ENCODE measurements at regions of chr14 and their contacts with region 1.

Region 1: DNA sequence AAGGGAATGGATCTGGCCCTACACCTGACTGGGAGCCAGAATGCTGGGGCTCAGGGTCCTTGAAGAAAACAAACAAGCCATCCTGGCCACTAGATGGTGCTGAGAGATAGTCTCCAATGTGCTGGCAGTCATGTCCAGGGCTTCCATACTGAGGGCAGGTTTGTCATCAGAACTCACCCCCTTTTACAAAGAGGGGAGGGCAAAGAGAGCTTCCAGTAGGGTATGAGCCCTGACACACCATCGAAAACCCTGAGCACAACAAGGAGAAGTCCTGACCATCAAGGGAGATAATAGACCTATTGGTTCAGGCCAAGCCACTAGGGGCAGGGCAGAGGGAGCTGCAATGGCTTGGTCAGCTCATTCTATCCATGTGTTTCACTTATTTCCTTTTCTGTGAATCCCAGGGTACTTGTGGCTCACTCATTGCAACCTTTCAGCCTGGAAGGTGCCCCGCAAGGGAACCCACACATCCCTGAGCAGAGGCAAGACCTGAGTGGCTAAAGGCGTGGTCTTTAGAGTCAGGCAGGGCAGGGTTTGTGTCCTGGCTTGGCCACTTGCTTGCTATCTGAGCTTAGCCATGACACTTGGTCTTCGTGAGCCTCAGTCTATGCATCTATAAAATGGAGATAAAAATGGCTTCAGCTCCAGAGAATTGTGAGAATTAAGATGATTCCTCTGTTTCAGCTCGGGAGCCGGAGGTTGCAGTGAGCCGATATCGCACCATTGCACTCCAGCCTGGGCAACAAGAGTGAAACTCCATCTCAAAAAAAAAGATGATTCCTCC is 6.2 kb upstream of the PLEKHH1 start:
- DNase-seq: peak; percentile 24
- H3K4me3 Mint-ChIP-seq: no peak overlapping the region
- H3K27ac Mint-ChIP-seq: no peak overlapping the region
- H3K4me1 Mint-ChIP-seq: no peaks in the 10 kb centered on the region
- H3K27me3 Mint-ChIP-seq: peaks cover 81% of the 10 kb centered on the region

Region 2: DNA sequence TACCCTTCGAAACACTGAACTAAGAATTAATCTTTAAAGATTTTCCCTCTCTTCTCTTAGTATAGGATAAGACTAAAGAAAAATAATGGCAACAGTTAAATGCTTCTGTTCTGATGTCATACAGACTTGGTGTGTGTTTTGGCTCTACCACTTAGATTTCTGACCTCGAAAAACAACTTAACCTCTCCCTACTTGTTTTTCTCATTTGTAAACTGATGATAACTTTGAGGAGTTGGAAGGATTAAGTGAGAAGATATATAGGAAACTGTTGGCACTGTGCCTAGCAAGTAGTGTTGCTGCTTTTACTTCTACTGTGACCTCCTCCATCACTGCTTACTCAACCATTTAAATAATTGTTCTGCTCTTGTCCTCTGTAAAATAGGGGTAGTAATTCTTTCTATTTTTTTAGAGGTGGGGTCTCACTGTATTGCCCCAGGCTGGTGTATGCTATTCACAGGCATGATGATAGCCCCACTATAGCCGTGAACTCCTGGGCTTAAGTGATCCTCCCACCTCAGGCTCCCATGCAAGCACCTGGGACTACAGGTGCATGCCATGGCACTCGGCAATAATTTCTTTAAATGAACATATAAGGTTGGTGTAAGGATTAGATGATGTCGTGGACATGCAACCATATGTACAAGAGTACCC is 263.2 kb before region 1 on chr14:
- intact Hi-C with region 1: no loop called
- DNase-seq: no peak
- H3K4me3 Mint-ChIP-seq: no peak overlapping the region
- H3K27ac Mint-ChIP-seq: no peak overlapping the region
- H3K4me1 Mint-ChIP-seq: peaks cover 9% of the 10 kb centered on the region
- H3K27me3 Mint-ChIP-seq: no peaks in the 10 kb centered on the region

Region 3: GRCh38 chr14:67319142-67319541 is 207.7 kb before region 1 on chr14:
- intact Hi-C with region 1: no loop called
- DNase-seq: no peak
- H3K4me3 Mint-ChIP-seq: no peak overlapping the region
- H3K27ac Mint-ChIP-seq: no peak overlapping the region
- H3K4me1 Mint-ChIP-seq: no peaks in the 10 kb centered on the region
- H3K27me3 Mint-ChIP-seq: no peaks in the 10 kb centered on the region

Region 4: GRCh38 chr14:67426983-67427606 is 99.8 kb before region 1 on chr14:
- intact Hi-C with region 1: loop called (anchors 2 kb)
- DNase-seq: peak; percentile 61
- H3K4me3 Mint-ChIP-seq: no peak overlapping the region
- H3K27ac Mint-ChIP-seq: no peak overlapping the region
- H3K4me1 Mint-ChIP-seq: peaks cover 7% of the 10 kb centered on the region
- H3K27me3 Mint-ChIP-seq: peaks cover 27% of the 10 kb centered on the region

Region 5: DNA sequence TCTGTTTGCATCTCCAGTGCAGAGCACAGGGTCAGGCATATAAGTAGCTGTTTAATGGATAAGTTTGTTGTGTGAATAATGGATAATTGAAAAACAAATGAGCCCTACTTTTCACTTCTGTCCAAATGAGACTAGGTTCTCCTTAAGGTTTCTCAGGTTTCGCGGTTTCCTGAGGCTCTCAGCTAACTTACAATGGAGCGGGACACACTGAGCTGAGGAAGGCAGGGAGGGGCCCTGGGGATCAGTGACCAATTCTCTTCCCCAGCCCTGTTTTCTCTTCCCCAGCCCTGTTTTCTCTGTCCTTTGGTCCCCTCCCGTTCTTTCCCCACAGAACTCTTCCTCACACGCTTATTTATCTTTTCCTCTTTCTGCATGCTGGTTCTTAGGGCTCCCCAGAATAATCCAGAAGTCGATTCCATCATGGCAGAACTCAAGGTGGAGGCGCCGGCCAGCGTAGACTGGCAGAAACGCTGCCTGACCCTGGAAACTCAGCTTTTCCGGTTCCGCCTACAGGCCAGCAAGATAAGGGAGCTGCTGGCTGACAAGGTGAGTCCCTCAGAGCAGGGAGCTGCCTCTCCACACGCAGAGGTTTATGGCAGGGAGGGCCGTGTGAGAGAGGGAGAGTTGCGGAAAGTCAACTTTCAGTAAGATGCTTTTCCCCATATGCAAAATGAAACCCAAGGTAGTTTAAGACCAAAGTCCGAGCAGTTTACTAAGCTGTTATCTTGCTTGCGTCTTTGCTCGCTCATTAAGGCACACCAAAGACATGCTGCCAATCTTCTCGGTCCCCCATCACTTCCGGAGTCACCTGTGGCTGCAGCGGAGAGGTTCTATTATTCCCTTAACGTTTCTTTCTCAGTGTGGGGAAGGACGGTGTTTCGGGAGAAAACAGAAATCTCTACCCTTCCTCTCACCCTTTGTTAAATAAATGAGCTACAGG is 14.8 kb after region 1 on chr14:
- intact Hi-C with region 1: no loop called
- DNase-seq: no peak
- H3K4me3 Mint-ChIP-seq: no peak overlapping the region
- H3K27ac Mint-ChIP-seq: peak overlapping the region; percentile 19
- H3K4me1 Mint-ChIP-seq: peaks cover 8% of the 10 kb centered on the region
- H3K27me3 Mint-ChIP-seq: peaks cover 33% of the 10 kb centered on the region

Region 6: DNA sequence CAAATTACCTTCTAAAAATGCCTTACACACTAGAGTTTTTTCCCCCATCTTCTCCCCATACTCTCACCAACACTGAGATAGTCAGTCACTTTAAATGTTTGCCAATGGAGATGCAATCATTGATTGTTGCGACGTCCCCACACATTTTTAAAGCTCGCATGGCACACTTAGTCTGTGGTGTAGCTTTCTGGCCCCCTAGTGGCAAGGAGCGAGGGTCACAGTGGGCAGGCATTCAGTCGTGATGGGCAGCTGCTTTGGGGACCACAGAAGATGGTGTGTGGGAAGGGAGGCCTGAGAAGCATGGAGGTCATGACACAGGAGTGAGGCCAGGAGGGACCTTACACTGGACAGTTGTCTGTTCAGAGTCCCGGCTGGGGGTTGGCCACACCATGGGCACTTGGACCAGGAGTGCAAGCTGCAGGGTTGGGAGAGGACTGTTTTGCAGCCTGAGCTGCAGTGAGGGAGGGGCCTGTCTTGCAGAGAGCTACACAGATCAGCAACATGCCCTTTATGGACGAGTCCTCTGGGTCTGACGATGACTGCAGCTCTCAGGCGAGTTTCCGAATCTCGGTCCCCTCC is 44.5 kb after region 1 on chr14:
- intact Hi-C with region 1: loop called (anchors 1 kb)
- DNase-seq: peak; percentile 54
- H3K4me3 Mint-ChIP-seq: no peak overlapping the region
- H3K27ac Mint-ChIP-seq: no peak overlapping the region
- H3K4me1 Mint-ChIP-seq: peaks cover 8% of the 10 kb centered on the region
- H3K27me3 Mint-ChIP-seq: peaks cover 5% of the 10 kb centered on the region

Region 7: DNA sequence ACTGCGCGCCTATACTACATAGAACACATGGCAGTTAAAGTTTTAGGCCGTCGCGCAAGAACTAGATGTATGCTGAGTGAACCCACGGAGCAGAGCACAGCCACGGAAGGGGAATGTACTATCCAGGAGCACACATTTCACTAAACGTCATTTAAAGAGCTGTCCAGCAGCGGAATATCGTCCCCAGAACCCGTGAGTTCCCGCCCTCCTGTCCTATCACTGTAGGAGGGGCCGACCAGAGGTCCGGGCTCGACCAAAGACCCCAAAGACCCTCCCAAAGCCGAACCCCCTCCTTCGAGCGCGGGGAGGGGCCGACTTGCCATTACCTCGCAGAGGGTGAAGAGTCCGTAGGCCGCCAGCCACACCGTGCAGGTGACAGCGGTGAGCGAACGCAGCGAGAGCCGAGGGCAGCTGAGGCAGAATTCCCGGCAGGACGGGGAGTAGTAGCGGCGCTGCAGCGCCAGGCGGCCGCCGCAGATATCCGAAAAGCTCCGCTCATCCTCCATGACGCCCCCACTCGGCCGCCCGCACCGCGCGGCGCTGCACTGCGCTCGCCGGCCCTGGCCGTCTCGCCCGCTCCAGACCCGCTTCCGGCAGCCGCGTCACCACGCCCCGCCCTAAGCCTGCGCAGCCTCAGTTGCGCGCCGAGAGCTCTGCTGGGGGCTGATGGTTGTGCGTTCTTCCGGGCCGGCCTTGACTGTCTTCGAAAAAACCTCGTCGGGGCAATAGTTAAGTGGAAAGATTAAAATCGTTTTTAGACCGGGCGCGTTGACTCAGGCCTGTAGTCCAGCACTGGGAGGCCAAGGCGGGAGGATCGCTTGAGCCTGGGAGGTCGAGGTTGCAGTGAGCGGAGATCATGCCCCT is 73.1 kb after region 1 on chr14 and contains the start of gene PIGH:
- intact Hi-C with region 1: loop called (anchors 2 kb)
- DNase-seq: peak; percentile 92
- H3K4me3 Mint-ChIP-seq: peak within 1 kb of the TSS; percentile 99
- H3K27ac Mint-ChIP-seq: peak within 1 kb of the TSS; percentile 94
- H3K4me1 Mint-ChIP-seq: peaks cover 44% of the 10 kb centered on the region
- H3K27me3 Mint-ChIP-seq: peaks cover 18% of the 10 kb centered on the region
- total RNA-seq, gene PIGH: 22.7 and 26.0 TPM in 2 replicates

Region 8: DNA sequence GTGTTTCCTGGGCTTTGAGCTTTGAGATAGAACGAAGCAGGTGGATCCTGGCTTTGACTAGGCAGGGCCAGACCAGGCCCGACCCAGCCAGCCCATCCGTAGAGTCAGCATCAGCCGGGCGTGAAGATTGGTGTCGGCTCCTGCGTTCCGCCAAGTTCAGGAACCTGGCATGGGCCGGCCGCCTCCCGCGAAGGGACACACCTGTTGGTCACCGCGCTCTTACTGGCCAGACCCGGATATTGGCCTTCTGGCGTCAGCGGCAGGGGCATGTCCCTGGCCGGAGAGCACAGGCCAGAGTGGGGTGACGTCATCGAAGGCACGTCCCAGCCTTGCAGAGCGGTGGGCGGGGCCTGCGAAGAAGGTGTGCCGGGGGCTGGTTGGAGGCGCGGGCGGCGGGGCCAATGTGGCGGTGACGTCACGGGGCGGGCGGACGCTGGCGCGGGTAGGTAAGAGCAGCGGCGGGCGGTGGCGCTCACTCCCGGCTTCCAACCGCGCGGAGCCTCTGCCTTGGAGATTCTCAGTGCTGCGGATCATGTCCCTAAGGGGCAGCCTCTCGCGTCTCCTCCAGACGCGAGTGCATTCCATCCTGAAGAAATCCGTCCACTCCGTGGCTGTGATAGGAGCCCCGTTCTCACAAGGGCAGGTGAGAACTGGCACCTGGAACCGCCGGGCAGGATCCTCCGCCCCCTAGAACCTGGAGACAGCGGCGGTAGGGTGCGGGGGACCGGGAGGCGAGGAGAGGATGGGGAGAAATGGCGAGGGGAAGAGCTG is 92.8 kb after region 1 on chr14 and contains the start of gene ARG2:
- intact Hi-C with region 1: loop called (anchors 5 kb)
- DNase-seq: peak; percentile 94
- H3K4me3 Mint-ChIP-seq: peak within 1 kb of the TSS; percentile 86
- H3K27ac Mint-ChIP-seq: peak within 1 kb of the TSS; percentile 71
- H3K4me1 Mint-ChIP-seq: peaks cover 39% of the 10 kb centered on the region
- H3K27me3 Mint-ChIP-seq: peaks cover 14% of the 10 kb centered on the region
- total RNA-seq, gene ARG2: 5.2 and 7.1 TPM in 2 replicates

Region 9: DNA sequence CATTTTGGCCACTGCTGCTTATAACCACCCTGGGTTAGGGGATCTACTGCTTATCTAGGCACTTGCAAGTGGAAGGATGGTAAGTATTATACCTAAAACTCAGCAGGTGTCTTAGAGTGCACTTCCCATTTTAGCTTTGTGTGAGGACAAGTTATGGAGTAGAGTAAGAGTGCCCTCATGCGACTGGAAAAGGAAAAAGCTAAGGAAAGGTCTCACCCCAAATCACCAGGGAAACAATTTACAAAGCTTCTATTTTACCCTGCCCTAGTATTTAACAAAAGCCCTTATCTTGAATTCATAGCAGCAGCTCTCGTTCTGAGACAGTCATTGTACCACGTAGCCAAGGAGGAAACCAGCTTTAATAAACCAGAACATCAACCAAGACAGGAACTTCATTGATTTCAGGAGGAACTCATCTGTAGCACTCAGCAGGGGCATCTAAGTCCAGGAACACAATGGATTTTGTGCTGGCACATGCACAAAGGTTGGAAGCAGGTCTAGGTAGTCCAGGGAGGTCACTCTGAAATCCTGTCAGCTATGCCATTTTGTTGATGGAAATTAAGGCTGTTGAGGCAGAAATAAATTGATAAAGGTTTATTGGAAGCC is 177.7 kb after region 1 on chr14:
- intact Hi-C with region 1: loop called (anchors 1 kb)
- DNase-seq: peak; percentile 12
- H3K4me3 Mint-ChIP-seq: no peak overlapping the region
- H3K27ac Mint-ChIP-seq: no peak overlapping the region
- H3K4me1 Mint-ChIP-seq: no peaks in the 10 kb centered on the region
- H3K27me3 Mint-ChIP-seq: peaks cover 4% of the 10 kb centered on the region

Measured in activated T-helper 1 cell treated with anti-CD3 and anti-CD28 coated beads, Interleukin-12 subunit alpha, Interleukin-12 subunit beta, Interleukin-2, Interleukin-4 antibody, amounts not matched to agents 30 ng/mL and 10 ng/mL and 1 ng/mL, durations not matched to agents 14 hours and 24 hours and 36 hours (primary cell).